A549 (cell line): ENCODE measurements at regions of chr11 and their contacts with region 1.

Region 1: DNA sequence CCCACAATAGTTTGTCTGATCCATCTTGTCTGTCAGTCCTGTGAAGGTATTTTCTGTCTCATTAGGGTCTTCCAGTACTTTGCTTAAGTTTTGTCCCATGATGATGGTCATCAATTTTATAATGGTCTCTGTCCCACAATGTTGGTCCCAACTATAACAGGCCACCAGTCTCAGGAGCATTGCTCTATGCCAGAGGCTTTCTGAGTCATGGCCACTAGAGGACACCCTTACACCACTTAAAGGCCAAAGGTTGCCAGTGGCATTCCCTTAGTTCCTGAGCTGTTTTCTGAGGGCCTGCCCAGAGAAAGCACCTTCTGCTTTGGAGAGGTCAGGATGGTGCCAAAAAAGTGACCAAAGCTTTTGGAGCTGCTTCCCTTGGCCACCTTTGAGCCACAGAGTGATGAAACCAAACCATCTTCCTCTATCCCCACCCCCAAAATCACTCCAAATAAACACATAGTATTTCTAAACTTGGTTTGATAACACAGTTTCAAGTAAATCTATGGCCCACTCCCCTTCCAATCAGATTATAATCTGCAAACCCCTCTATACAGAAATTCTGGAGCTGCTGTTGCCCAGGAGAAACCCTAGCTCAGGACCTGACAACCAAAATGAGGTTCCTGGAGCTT is 19.3 kb downstream of the EIF3F start:
- DNase-seq: peak; percentile 66 to 71
- ATAC-seq: peak; percentile 91 to 97
- H3K4me3 ChIP-seq: no peak overlapping the region
- H3K27ac ChIP-seq: no peak overlapping the region
- H3K4me1 ChIP-seq: no peaks in the 10 kb centered on the region
- CTCF ChIP-seq: peak; percentile 92
- EP300 ChIP-seq: no peak
- POLR2A ChIP-seq: no peak
- RAD21 ChIP-seq: peak; percentile 92 to 96

Region 2: DNA sequence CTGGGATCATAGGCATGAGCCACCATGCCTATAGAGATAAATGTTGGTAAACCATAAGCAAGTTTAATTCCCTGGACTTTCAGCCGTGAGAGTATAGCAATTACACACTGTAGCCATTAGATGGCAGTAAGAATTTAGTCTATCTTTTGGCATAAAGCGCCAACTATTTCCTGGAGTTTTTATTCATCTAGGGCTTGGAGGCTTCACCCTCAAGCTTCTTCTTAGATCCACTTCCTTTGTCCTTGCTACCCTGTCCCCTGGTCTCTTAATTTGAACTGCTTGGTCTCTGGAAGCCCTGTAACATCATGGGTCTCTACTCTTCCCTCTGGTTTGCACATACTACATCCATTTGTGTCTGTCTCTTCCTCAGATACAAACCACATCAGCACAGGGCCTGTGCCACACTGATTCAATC is 113.6 kb before region 1 on chr11:
- CTCF ChIA-PET with region 1: interaction called, 12 read pairs
- POLR2A ChIA-PET with region 1: no interaction called
- DNase-seq: peak; percentile 54 to 57
- ATAC-seq: peak; percentile 75 to 92; a peak in 5 of 6 replicates
- H3K4me3 ChIP-seq: no peak overlapping the region
- H3K27ac ChIP-seq: no peak overlapping the region
- H3K4me1 ChIP-seq: no peaks in the 10 kb centered on the region
- CTCF ChIP-seq: peak; percentile 76
- EP300 ChIP-seq: no peak
- POLR2A ChIP-seq: no peak
- RAD21 ChIP-seq: peak; percentile 66 to 70

Region 3: DNA sequence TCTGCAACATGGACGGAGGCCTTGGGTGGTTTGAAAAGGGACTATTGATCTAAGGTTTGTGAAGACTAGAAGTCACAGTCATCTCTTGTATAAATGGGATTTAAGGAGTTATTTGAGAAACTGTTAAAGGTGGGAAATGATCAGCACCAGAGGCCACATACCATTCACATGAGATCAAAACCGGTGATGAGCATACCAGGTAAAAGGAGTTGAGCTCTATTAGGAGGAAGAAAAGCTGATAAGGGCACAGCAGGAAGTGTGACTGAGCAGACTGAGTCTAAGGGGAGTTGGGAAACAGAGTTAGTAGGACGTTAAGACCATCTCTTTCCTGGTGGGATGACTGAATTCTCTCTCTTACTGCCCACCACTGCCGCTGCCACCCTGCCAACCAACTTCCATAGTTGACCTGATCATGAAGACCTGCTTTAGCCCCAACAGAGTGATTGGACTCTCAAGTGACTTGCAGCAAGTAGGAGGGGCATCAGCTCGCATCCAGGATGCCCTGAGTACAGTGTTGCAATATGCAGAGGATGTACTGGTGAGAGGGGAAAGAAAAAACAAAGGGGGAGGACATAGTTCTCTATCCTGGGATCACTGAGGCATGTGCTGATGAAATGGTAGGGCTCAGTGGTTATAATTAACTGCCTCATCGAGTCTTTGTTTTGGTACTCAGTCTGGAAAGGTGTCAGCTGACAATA is 11.7 kb before region 1 on chr11:
- CTCF ChIA-PET with region 1: interaction called, 39 read pairs
- POLR2A ChIA-PET with region 1: no interaction called
- DNase-seq: no peak
- ATAC-seq: no peak
- H3K4me3 ChIP-seq: no peak overlapping the region
- H3K27ac ChIP-seq: no peak overlapping the region
- H3K4me1 ChIP-seq: no peaks in the 10 kb centered on the region
- CTCF ChIP-seq: no peak
- EP300 ChIP-seq: no peak
- POLR2A ChIP-seq: no peak
- RAD21 ChIP-seq: no peak

Region 4: DNA sequence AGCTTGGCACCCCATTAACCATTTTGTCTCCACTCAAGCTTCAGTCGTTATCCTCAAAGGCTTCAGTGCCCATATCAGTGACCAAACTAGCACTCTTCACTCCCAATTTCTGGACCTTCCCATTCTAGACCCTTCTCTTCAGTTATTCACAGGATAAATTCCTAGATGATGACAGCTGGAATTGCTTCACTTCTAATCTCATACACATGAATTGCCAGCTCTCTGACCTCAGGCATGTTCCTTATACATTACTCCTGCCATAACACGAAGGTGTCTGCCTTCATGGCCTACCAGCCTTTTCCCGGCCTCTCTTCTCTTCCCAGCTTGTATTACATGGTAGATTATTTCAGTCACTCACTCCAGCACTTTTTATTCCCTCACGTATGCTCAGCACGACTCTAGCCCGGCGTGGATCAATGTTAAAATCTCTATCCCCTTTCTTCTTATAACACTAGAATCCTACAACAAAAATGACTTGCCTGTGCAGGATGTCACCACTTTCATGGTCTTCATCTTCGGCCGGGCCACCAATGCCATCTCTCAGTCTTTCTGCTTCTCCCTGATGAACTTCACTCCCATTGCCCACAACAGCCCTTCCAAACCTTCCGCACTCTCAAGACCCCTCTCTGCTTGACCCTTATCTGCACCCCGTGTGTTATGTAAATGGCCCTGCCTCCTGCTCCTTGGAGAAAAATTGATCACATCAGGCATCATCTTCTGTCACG is 17.5 kb after region 1 on chr11:
- CTCF ChIA-PET with region 1: interaction called, 112 read pairs
- POLR2A ChIA-PET with region 1: no interaction called
- DNase-seq: no peak
- ATAC-seq: no peak
- H3K4me3 ChIP-seq: no peak overlapping the region
- H3K27ac ChIP-seq: no peak overlapping the region
- H3K4me1 ChIP-seq: no peaks in the 10 kb centered on the region
- CTCF ChIP-seq: no peak
- EP300 ChIP-seq: no peak
- POLR2A ChIP-seq: no peak
- RAD21 ChIP-seq: no peak

Region 5: DNA sequence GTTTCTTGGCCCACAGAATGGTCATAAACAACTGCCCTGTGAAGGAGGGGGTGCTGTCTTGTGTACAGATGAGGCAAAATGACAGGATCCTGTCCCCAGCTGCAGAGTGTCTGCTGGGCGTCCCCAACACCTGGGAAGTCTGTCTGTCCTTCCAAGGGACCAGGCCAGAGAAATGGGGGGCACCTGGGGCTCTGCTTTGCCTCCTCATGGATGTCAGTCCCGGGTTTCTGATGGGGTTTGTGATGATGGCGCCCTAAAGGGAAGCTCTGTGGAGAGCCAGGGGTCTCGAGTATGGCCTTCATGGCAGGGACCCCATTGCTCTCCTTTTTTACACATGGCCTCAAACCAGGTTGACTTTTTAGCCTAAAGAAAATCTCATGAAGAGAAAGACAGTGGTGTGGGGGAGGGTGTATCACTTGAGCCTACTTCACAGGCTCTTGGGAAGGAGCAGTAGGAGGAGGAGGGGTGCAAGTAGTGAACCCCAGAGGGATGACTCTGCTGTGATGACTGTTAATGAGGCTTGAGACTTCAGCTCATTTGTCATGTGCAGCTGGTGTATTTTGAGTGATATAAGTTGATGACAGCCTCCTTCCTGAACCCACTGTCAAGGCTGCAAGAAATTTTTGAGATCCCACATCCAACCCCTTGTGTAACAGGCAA is 33.9 kb after region 1 on chr11:
- CTCF ChIA-PET with region 1: interaction called, 103 read pairs
- POLR2A ChIA-PET with region 1: no interaction called
- DNase-seq: no peak
- ATAC-seq: no peak
- H3K4me3 ChIP-seq: no peak overlapping the region
- H3K27ac ChIP-seq: no peak overlapping the region
- H3K4me1 ChIP-seq: no peaks in the 10 kb centered on the region
- CTCF ChIP-seq: no peak
- EP300 ChIP-seq: no peak
- POLR2A ChIP-seq: no peak
- RAD21 ChIP-seq: no peak

Region 6: GRCh38 chr11:8080674-8081590 is 74.5 kb after region 1 on chr11 and contains the start of gene TUB:
- CTCF ChIA-PET with region 1: interaction called, 626 read pairs
- POLR2A ChIA-PET with region 1: no interaction called
- DNase-seq: peak; percentile 19 to 65
- ATAC-seq: peak; percentile 64 to 78
- H3K4me3 ChIP-seq: peak within 1 kb of the TSS; percentile 80
- H3K27ac ChIP-seq: peak within 1 kb of the TSS; percentile 74 to 88
- H3K4me1 ChIP-seq: peaks cover 6% of the 10 kb centered on the region; the same call in 1 of the 3 replicates
- CTCF ChIP-seq: no peak
- EP300 ChIP-seq: no peak
- POLR2A ChIP-seq: peak; percentile 41
- RAD21 ChIP-seq: no peak
- polyA plus RNA-seq, gene TUB: 11.3 and 11.7 TPM in 2 replicates

Region 7: GRCh38 chr11:8105666-8106065 is 99.2 kb after region 1 on chr11:
- CTCF ChIA-PET with region 1: interaction called, 626 read pairs
- POLR2A ChIA-PET with region 1: no interaction called
- DNase-seq: no peak
- ATAC-seq: no peak
- H3K4me3 ChIP-seq: no peak overlapping the region
- H3K27ac ChIP-seq: no peak overlapping the region
- H3K4me1 ChIP-seq: no peaks in the 10 kb centered on the region
- CTCF ChIP-seq: no peak
- EP300 ChIP-seq: no peak
- POLR2A ChIP-seq: no peak
- RAD21 ChIP-seq: no peak